ENCODE measurements at regions of chr3 and their contacts with region 1.

Region 1: DNA sequence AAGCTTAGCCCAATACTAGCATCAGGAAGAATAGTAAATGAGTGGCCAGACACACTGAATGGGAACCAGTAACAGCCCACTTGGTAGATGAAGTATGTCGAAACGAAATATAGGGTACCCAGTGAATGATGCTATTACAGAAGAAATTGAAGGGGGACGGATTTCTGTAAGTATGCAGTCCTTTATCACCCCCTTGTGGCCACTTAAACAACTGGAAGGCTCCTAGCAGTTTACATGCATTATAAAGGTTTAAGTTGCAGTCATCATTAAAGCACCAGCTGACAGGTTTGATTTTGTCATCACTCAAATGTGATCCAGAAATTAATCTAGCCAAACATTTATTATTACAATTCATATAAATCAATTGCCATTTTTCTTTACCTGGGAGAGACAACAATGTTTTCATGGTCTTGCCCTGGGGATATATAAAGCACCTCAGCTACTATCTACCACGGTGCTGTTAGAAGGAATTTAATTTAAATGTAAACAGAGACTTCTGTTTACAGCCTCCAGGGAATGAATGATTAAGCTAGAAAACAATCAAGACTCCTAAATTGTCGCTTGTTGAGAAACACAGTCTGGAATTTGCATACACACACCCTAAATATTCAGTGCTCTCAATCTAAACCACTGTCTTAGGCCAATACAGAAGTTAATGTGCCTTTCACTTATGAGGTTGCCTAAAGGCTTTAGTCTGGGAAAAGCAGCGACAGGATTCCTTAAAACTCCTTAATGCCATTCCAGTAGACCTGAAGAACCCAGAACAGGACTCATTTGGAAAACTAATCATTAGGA is 7.8 kb downstream of the EIF1B start:
- DNase-seq: peak; percentile 52 to 80 (median 75)
- H3K4me3 ChIP-seq: no peak overlapping the region
- H3K4me3 Mint-ChIP-seq: no peak overlapping the region
- H3K27ac ChIP-seq: no peak overlapping the region
- H3K27ac Mint-ChIP-seq: no peak overlapping the region
- H3K4me1 ChIP-seq: peaks cover 23 to 25% of the 10 kb centered on the region in 2 donors
- H3K4me1 Mint-ChIP-seq: peaks cover 19% of the 10 kb centered on the region
- H3K27me3 ChIP-seq: no peaks in the 10 kb centered on the region
- H3K27me3 Mint-ChIP-seq: peaks cover 0 to 2% (median 2%) of the 10 kb centered on the region in 3 donors
- CTCF ChIP-seq: peak; percentile 88

Region 2: GRCh38 chr3:39707314-39707909 is 609.8 kb before region 1 on chr3:
- intact Hi-C with region 1: loop called in 1 of 2 experiments (anchors 5 kb)
- DNase-seq: peak in 2 of 3 donors; percentile 1 to 8
- H3K4me3 ChIP-seq: no peak overlapping the region
- H3K4me3 Mint-ChIP-seq: no peak overlapping the region
- H3K27ac ChIP-seq: no peak overlapping the region
- H3K27ac Mint-ChIP-seq: no peak overlapping the region
- H3K4me1 ChIP-seq: no peaks in the 10 kb centered on the region
- H3K4me1 Mint-ChIP-seq: peaks cover 2% of the 10 kb centered on the region
- H3K27me3 ChIP-seq: no peaks in the 10 kb centered on the region
- H3K27me3 Mint-ChIP-seq: peaks cover 2 to 5% (median 2%) of the 10 kb centered on the region in 3 donors
- CTCF ChIP-seq: peak; percentile 78

Region 3: DNA sequence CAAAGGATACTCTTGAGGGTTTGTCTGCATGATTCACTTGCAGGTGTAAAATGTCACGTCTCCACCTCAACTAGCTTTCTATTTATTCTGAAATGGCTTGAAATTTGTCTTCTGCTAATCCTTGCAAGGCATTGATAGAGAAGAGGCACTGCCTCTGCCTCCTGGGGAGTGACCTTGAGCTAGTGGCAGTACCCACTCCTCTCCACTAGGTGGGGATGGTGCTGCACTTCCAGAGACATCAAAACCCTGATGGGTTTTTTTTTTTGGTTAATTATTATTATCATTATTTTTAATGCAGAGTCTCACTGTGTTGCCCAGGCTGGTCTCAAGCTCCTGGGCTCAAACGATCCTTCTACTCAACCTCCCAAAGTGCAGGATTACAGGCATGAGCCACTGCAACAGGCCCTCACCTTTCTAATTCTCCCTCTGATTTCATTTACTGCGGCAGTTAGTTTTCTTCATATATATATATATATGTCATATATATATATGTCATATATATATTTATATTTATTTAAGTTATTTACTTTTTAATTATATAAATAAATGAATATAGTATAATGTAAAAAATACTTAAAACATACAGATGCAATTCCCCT is 125.3 kb before region 1 on chr3:
- intact Hi-C with region 1: loop called (anchors 2 kb)
- DNase-seq: peak; percentile 42 to 65 (median 51)
- H3K4me3 ChIP-seq: no peak overlapping the region
- H3K4me3 Mint-ChIP-seq: no peak overlapping the region
- H3K27ac ChIP-seq: no peak overlapping the region
- H3K27ac Mint-ChIP-seq: no peak overlapping the region
- H3K4me1 ChIP-seq: no peaks in the 10 kb centered on the region
- H3K4me1 Mint-ChIP-seq: no peaks in the 10 kb centered on the region
- H3K27me3 ChIP-seq: no peaks in the 10 kb centered on the region
- H3K27me3 Mint-ChIP-seq: peaks cover 0 to 1% (median 0%) of the 10 kb centered on the region in 3 donors
- CTCF ChIP-seq: peak; percentile 96

Region 4: DNA sequence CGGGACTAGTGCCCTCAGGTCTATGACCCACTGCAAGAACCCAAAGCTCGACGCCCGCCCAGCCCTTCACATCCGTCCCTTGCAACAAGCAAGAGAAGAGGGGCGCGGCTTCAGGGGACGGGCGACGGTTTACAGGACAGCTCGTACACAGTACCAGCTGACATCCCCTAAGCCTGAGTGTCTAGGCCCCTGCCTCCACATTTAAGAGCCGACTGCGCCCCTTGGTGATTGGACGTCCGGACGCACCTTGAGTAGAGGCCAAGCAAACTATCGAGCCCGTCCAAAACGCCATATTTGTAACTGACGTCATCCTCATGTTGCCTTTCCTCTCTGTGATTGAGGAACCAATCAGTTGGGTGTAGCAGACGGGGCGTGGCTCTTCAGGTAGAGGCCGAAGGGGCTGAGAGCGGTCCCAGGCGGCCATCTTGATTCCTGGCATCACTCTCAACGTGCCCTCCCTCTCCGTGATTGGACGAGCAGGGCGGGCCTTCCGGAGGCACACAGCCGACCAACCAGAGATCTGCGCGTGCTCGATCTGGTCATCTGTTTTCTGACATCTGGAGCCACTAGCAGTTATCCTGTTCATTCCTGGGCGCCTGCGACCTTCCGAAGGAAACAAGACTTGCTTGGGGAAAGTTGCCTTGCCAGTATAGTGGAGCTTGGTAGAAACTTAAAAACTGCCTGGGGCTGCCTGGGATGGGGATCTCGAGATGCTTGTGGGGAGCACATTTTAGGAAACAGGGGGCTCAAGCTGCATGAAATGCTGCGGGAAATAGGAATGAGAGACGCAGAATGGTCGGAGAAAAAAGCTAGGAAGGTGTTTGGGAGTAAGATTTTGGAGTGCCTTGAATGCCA is 135.8 kb after region 1 on chr3:
- intact Hi-C with region 1: loop called in 1 of 2 experiments (anchors 10 kb)
- DNase-seq: peak; percentile 98 to 99 (median 99)
- H3K4me3 ChIP-seq: peak overlapping the region; percentile 75 to 94 (median 82)
- H3K4me3 Mint-ChIP-seq: peak overlapping the region; percentile 87 to 93
- H3K27ac ChIP-seq: peak overlapping the region; percentile 79 to 94
- H3K27ac Mint-ChIP-seq: peak overlapping the region; percentile 95 to 99 (median 98)
- H3K4me1 ChIP-seq: peaks cover 29 to 38% of the 10 kb centered on the region in 2 donors
- H3K4me1 Mint-ChIP-seq: peaks cover 24% of the 10 kb centered on the region
- H3K27me3 ChIP-seq: no peaks in the 10 kb centered on the region
- H3K27me3 Mint-ChIP-seq: no peaks in the 10 kb centered on the region
- CTCF ChIP-seq: no peak

Region 5: GRCh38 chr3:41961750-41962679 is 1644.8 kb after region 1 on chr3 and contains the start of gene ULK4:
- intact Hi-C with region 1: loop called in 1 of 2 experiments (anchors 10 kb)
- DNase-seq: peak; percentile 99 to 100 (median 99)
- H3K4me3 ChIP-seq: peak within 1 kb of the TSS; percentile 61 to 100 (median 82)
- H3K4me3 Mint-ChIP-seq: peak within 1 kb of the TSS; percentile 99
- H3K27ac ChIP-seq: peak within 1 kb of the TSS; percentile 47 to 87
- H3K27ac Mint-ChIP-seq: peak within 1 kb of the TSS; percentile 91 to 98 (median 96)
- H3K4me1 ChIP-seq: peaks cover 13 to 18% of the 10 kb centered on the region in 2 donors
- H3K4me1 Mint-ChIP-seq: peaks cover 17% of the 10 kb centered on the region
- H3K27me3 ChIP-seq: no peaks in the 10 kb centered on the region
- H3K27me3 Mint-ChIP-seq: no peaks in the 10 kb centered on the region
- CTCF ChIP-seq: no peak
- polyA plus RNA-seq, gene ULK4: 6.7 to 14.0 (median 11.8) TPM